ENCODE measurements at regions of chr16 and their contacts with region 1.

Region 1: GRCh38 chr16:21584817-21585216 is 14.6 kb upstream of the METTL9 start:
- DNase-seq: no peak
- ATAC-seq: no peak
- H3K4me3 ChIP-seq: no peak overlapping the region
- H3K27ac ChIP-seq: no peak overlapping the region
- H3K4me1 ChIP-seq: no peaks in the 10 kb centered on the region
- H3K27me3 ChIP-seq: no peaks in the 10 kb centered on the region
- CTCF ChIP-seq: no peak
- EP300 ChIP-seq: no peak
- POLR2A ChIP-seq: no peak
- RAD21 ChIP-seq: no peak

Region 2: GRCh38 chr16:21501909-21502667 is 82.7 kb before region 1 on chr16:
- CTCF ChIA-PET with region 1: no interaction called
- POLR2A ChIA-PET with region 1: no interaction called
- RAD21 ChIA-PET with region 1: no interaction called
- SMC1A ChIA-PET with region 1: no interaction called
- in situ Hi-C with region 1: no loop called
- intact Hi-C with region 1: no loop called
- DNase-seq: peak; percentile 92
- ATAC-seq: peak; percentile 83
- H3K4me3 ChIP-seq: peak overlapping the region; percentile 79
- H3K27ac ChIP-seq: peak overlapping the region; percentile 88
- H3K4me1 ChIP-seq: peaks cover 10% of the 10 kb centered on the region; the same call in 1 of the 2 replicates
- H3K27me3 ChIP-seq: no peaks in the 10 kb centered on the region
- CTCF ChIP-seq: no peak; a peak in 1 of 6 replicates
- EP300 ChIP-seq: no peak
- POLR2A ChIP-seq: peak; percentile 86
- RAD21 ChIP-seq: no peak

Region 3: DNA sequence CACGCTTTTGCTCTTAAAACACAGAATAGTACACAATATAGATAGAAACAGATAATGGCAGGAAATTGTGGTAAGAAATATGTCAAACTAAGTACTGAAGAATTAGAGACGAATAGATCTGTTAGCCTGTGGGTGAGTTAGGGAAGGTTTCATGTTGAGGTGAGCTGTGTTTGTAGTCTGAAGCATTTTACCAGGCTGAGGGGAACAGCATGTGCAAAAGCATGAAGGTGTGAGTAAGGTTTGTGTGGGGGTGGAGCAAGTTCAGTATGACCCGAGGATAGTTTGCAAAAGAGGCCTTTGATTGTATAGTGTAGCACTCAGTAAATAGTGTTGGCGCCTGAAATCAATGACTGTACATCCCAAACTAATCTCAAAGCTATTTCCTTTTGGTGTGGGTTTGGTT is 53.8 kb after region 1 on chr16:
- CTCF ChIA-PET with region 1: interaction called, 89 read pairs
- POLR2A ChIA-PET with region 1: interaction called, 3 read pairs
- RAD21 ChIA-PET with region 1: interaction called, 52 read pairs
- SMC1A ChIA-PET with region 1: interaction called, 204 read pairs
- in situ Hi-C with region 1: no loop called
- intact Hi-C with region 1: loop called (anchors 1 kb)
- DNase-seq: no peak
- ATAC-seq: peak; percentile 81
- H3K4me3 ChIP-seq: no peak overlapping the region
- H3K27ac ChIP-seq: no peak overlapping the region
- H3K4me1 ChIP-seq: 0 out of 2 replicates have a peak, but pooled peaks cover 2% of the 10 kb centered on the region
- H3K27me3 ChIP-seq: no peaks in the 10 kb centered on the region
- CTCF ChIP-seq: no peak
- EP300 ChIP-seq: no peak
- POLR2A ChIP-seq: no peak
- RAD21 ChIP-seq: no peak

Region 4: GRCh38 chr16:21663889-21664647 is 79.3 kb after region 1 on chr16 and contains the start of gene OTOA:
- CTCF ChIA-PET with region 1: no interaction called
- POLR2A ChIA-PET with region 1: no interaction called
- RAD21 ChIA-PET with region 1: no interaction called
- SMC1A ChIA-PET with region 1: no interaction called
- in situ Hi-C with region 1: no loop called
- intact Hi-C with region 1: no loop called
- DNase-seq: no peak
- ATAC-seq: peak; percentile 73
- H3K4me3 ChIP-seq: no peak within 1 kb of the TSS
- H3K27ac ChIP-seq: no peak within 1 kb of the TSS
- H3K4me1 ChIP-seq: no peaks in the 10 kb centered on the region; the same call in 1 of the 2 replicates
- H3K27me3 ChIP-seq: peaks cover 0 to 3% of the 10 kb centered on the region in 2 experiments; a peak in 2 of 4 replicates
- CTCF ChIP-seq: no peak
- EP300 ChIP-seq: no peak
- POLR2A ChIP-seq: no peak
- RAD21 ChIP-seq: no peak
- polyA plus RNA-seq, gene OTOA: 0.42 to 0.60 TPM

Region 5: DNA sequence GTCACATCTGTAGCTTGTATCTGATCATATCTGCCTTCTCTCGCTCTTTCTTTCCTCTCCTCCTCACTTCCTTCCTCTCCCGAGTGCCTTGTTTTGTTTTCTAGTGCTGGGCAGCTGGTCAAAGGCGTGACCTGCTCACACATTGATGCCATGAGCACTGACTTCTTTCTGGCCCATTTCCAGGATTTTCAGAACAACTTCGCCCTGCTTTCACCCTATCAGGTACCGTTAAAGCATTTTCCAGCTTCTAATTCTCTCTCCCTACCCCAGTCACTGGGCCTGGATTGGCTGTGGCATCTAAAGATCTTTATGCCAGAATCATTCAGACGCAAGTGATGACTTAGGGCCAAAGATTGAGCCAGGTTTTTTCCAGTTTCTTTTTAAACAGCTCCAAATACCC is 134.5 kb after region 1 on chr16:
- CTCF ChIA-PET with region 1: no interaction called
- POLR2A ChIA-PET with region 1: no interaction called
- RAD21 ChIA-PET with region 1: no interaction called
- SMC1A ChIA-PET with region 1: interaction called, 14 read pairs
- in situ Hi-C with region 1: no loop called
- intact Hi-C with region 1: no loop called
- DNase-seq: no peak
- ATAC-seq: no peak
- H3K4me3 ChIP-seq: no peak overlapping the region
- H3K27ac ChIP-seq: no peak overlapping the region
- H3K4me1 ChIP-seq: peaks cover 3% of the 10 kb centered on the region
- H3K27me3 ChIP-seq: no peaks in the 10 kb centered on the region
- CTCF ChIP-seq: no peak
- EP300 ChIP-seq: no peak
- POLR2A ChIP-seq: no peak
- RAD21 ChIP-seq: no peak

Region 6: DNA sequence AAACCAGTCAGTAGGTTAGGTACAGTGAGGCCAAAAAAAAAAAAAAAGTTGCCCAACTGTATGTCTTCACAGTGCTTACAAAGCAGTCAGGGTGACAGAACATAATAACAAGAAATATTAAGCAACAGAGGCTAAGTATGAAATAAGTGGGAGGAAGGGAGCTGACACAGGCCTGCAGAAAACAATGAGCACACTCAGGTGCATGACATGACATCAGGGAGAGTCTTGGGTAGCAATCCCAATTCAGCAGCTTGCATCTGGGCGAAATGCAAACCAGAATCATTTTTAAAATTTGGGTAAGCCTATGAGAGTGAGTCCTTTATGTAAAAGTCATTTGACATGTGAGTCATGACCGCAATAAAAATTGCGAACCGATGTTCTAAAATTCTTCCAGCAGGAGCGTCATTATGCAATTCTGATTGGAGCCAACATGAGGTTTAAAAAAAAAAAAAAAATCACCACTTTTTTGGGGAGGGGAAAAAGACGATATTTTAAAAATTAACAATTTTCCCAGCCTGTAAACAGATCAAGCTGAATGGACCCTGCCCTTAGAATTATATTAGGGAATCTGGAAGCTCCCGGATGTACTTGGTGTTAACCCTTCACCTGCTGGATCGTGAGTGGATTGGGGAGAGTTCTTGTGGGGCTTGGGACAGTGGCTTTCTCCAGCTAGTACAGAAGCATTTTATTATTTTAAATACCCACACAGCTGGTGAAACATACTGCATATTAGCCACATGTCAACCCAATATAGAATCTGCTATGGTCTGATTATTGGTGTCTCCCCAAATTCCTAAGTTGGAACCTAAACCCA is 1053.8 kb after region 1 on chr16:
- CTCF ChIA-PET with region 1: no interaction called
- POLR2A ChIA-PET with region 1: interaction called, 5 read pairs
- RAD21 ChIA-PET with region 1: no interaction called
- SMC1A ChIA-PET with region 1: no interaction called
- in situ Hi-C with region 1: loop called (anchors 5 kb)
- intact Hi-C with region 1: no loop called
- DNase-seq: no peak
- ATAC-seq: no peak
- H3K4me3 ChIP-seq: no peak overlapping the region
- H3K27ac ChIP-seq: no peak overlapping the region
- H3K4me1 ChIP-seq: no peaks in the 10 kb centered on the region
- H3K27me3 ChIP-seq: no peaks in the 10 kb centered on the region
- CTCF ChIP-seq: no peak
- EP300 ChIP-seq: no peak
- POLR2A ChIP-seq: no peak
- RAD21 ChIP-seq: no peak

Region 7: DNA sequence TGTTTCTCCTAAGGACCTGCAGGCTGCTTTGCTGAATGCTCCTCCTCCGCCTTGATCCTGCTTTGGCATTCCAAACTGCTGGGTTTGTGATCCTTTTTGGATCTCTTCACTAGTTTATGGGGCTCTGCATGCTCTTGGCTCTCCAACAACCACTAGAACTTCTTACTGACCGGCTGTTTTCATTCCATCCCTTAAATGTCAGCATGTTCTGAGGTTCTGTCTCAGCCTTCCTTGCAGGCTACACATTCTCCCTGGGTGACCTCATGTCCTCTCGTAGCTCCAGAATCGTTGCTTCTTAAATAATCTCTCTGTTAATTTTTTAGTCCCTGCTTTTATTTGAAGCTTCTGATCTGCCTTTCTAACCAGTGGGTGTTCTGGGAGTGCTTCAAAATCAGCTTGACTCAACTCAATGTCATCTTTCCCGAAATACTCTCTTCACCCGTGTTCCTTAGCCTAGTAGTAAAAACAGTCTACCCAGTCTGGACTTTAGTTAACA is 1110.1 kb after region 1 on chr16:
- CTCF ChIA-PET with region 1: interaction called, 9 read pairs
- POLR2A ChIA-PET with region 1: no interaction called
- RAD21 ChIA-PET with region 1: interaction called, 3 read pairs
- SMC1A ChIA-PET with region 1: no interaction called
- in situ Hi-C with region 1: loop called (anchors 5 kb)
- intact Hi-C with region 1: no loop called
- DNase-seq: no peak
- ATAC-seq: no peak
- H3K4me3 ChIP-seq: no peak overlapping the region
- H3K27ac ChIP-seq: no peak overlapping the region
- H3K4me1 ChIP-seq: no peaks in the 10 kb centered on the region
- H3K27me3 ChIP-seq: peaks cover 1 to 4% of the 10 kb centered on the region in 2 experiments; a peak in 1 of 4 replicates
- CTCF ChIP-seq: no peak
- EP300 ChIP-seq: no peak
- POLR2A ChIP-seq: no peak
- RAD21 ChIP-seq: no peak